Activated CD8-positive, alpha-beta T cell treated with anti-CD3 and anti-CD28 coated beads for 36 hours (primary cell): ENCODE measurements at regions of chr12 and their contacts with region 1.

Region 1: DNA sequence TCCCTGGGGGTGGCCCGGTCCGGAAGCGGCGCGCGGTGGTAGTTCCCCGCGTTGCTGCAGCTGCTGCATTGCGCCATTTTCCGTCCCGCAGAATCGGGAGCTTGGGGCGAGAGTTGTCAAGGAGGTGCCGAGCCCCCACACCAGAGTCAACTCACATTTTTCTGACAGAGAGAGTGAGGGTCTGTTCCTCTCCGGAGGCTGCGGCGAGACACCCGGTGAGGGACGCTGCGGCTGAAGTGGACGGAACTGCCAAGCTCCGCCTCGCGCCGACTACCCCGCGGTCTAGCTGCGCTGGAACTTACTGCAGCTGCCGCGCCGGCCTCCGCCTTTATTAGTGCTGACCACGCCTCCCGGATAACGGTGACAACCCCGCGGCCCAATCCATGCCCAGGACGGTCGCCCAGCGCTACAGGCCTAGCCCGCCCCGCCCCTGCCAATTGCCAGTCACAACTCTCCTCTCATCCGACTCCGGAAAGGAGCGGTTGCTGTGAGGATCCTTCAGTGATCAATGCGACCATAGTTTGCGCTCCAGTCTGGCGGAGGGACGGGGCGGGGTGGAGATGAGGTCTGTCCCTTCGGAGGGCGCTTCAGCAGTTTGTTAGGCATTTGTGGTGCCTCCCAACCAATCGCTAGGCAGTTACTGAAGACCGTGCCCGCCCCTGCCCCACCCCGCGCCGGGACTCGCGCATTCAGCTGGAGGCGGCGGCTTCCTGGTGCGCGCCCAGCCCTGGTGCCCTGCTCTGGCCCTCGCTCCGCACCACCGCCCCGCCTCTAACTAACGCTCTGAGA is at the start of gene VAMP1:
- DNase-seq: peak; percentile 99
- ATAC-seq: peak; percentile 90
- H3K4me3 Mint-ChIP-seq: peak within 1 kb of the TSS; percentile 89
- H3K27ac Mint-ChIP-seq: peak within 1 kb of the TSS; percentile 88
- H3K4me1 Mint-ChIP-seq: peaks cover 44% of the 10 kb centered on the region
- H3K27me3 Mint-ChIP-seq: no peaks in the 10 kb centered on the region
- CTCF ChIP-seq: no peak
- total RNA-seq, gene VAMP1: 50.0 to 51.2 TPM

Region 2: GRCh38 chr12:6124411-6125309 is 345.9 kb before region 1 on chr12 and contains the start of gene VWF:
- CTCF ChIA-PET with region 1: no interaction called
- POLR2A ChIA-PET with region 1: no interaction called
- intact Hi-C with region 1: no loop called
- DNase-seq: no peak
- ATAC-seq: no peak
- H3K4me3 Mint-ChIP-seq: no peak within 1 kb of the TSS
- H3K27ac Mint-ChIP-seq: no peak within 1 kb of the TSS
- H3K4me1 Mint-ChIP-seq: no peaks in the 10 kb centered on the region
- H3K27me3 Mint-ChIP-seq: no peaks in the 10 kb centered on the region
- CTCF ChIP-seq: no peak
- total RNA-seq, gene VWF: 0.11 to 0.13 TPM

Region 3: GRCh38 chr12:6323340-6323994 is 147.1 kb before region 1 on chr12:
- CTCF ChIA-PET with region 1: interaction called, 13 read pairs
- POLR2A ChIA-PET with region 1: interaction called, 8 read pairs
- intact Hi-C with region 1: no loop called
- DNase-seq: peak; percentile 55
- ATAC-seq: peak; percentile 75
- H3K4me3 Mint-ChIP-seq: peak overlapping the region; percentile 51
- H3K27ac Mint-ChIP-seq: peak overlapping the region; percentile 89
- H3K4me1 Mint-ChIP-seq: peaks cover 49% of the 10 kb centered on the region
- H3K27me3 Mint-ChIP-seq: no peaks in the 10 kb centered on the region
- CTCF ChIP-seq: peak; percentile 86

Region 4: DNA sequence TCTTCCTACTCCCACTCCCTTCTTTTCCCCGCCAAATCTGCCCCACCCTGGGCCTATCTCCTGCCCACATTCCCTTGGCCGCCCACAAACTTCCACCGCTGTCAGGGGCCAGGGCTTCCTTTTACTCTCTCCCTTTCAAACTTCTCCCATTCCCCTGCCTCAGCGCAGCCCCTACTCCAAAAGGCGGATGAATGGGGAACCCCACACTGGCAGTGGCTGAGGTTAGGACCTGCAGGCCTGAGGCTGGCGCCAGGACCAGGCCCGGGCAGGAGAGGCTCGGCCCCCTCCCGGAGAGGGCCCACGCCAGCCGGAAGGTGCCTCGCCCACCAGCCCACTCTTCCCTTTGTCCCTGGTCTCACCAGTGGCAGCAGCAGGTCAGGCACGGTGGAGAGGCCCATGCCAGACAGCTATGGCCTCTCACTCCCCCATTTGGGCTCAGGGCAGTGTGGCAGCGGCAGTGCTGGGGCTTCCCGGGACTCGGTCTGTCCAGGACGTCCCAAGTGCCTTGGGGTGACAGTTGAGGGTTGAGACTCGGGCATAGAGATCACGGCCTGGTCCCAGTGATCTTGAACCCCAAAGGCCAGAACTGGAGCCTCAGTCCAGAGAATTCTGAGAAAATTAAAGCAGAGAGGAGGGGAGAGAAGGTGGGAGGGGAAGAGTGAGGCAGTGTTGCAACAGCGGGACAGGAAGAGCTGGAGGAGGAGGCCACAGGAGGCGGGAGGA is 129.0 kb before region 1 on chr12 and contains the start of gene TNFRSF1A:
- CTCF ChIA-PET with region 1: interaction called, 31 read pairs
- POLR2A ChIA-PET with region 1: interaction called, 10 read pairs
- intact Hi-C with region 1: loop called (anchors 10 kb)
- DNase-seq: peak; percentile 62
- ATAC-seq: peak; percentile 27
- H3K4me3 Mint-ChIP-seq: no peak within 1 kb of the TSS
- H3K27ac Mint-ChIP-seq: no peak within 1 kb of the TSS
- H3K4me1 Mint-ChIP-seq: peaks cover 40% of the 10 kb centered on the region
- H3K27me3 Mint-ChIP-seq: no peaks in the 10 kb centered on the region
- CTCF ChIP-seq: no peak
- total RNA-seq, gene TNFRSF1A: 40.6 TPM

Region 5: DNA sequence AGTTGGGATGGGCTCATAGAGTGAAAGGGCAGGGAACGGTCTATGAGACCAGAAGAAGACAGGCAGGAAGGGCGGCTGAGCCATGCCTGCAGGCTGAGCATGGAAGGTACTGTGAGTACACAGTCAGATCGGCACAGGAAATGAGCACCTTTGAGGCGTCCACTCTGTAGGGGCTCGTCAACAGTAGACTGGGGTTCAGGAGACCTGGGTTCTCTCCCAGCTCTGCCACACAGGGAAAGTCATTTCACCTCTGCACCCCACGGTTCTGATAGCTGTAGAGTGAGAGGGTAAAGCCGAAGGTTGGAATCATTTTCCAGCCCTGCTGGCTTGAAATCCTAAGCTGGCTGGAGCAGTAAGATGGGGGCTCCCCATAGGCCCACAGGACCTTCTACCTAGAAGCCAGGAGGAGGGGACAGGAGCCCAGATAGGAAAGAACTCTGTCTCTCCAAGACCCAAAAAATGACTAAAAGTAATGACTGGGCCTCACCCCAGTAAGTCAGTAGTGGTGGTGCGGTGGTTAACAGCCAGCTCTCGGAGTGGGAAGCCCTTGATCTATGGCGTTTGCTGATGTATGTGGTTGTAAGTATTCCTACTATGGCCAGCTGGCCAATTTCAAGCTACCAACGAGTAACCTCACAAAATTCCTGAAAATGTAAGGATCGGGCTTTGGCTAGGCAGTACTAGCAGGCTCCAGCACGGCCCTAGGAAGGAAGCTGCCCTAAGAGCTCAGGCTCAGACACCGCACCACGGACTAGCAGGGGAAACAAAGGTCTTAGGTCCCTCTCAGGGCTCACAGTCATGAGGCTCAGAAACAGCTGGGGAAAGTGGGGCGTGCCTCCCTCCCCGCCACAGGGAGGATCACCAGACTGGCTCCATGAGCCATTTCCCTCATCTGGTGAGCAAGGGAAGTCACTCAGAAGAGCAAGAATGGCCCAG is 36.1 kb before region 1 on chr12:
- CTCF ChIA-PET with region 1: interaction called, 145 read pairs
- POLR2A ChIA-PET with region 1: interaction called, 14 read pairs
- intact Hi-C with region 1: no loop called
- DNase-seq: peak; percentile 72
- ATAC-seq: peak; percentile 84
- H3K4me3 Mint-ChIP-seq: peak overlapping the region; percentile 63
- H3K27ac Mint-ChIP-seq: peak overlapping the region; percentile 90
- H3K4me1 Mint-ChIP-seq: peaks cover 71% of the 10 kb centered on the region
- H3K27me3 Mint-ChIP-seq: no peaks in the 10 kb centered on the region
- CTCF ChIP-seq: no peak

Region 6: GRCh38 chr12:6451348-6452244 is 19.0 kb before region 1 on chr12 and contains the start of gene TAPBPL:
- CTCF ChIA-PET with region 1: interaction called, 81 read pairs
- POLR2A ChIA-PET with region 1: interaction called, 110 read pairs
- intact Hi-C with region 1: no loop called
- DNase-seq: peak; percentile 94
- ATAC-seq: peak; percentile 77
- H3K4me3 Mint-ChIP-seq: peak within 1 kb of the TSS; percentile 97
- H3K27ac Mint-ChIP-seq: peak within 1 kb of the TSS; percentile 99
- H3K4me1 Mint-ChIP-seq: peaks cover 53% of the 10 kb centered on the region
- H3K27me3 Mint-ChIP-seq: no peaks in the 10 kb centered on the region
- CTCF ChIP-seq: no peak
- total RNA-seq, gene TAPBPL: 23.3 to 28.0 TPM

Region 7: DNA sequence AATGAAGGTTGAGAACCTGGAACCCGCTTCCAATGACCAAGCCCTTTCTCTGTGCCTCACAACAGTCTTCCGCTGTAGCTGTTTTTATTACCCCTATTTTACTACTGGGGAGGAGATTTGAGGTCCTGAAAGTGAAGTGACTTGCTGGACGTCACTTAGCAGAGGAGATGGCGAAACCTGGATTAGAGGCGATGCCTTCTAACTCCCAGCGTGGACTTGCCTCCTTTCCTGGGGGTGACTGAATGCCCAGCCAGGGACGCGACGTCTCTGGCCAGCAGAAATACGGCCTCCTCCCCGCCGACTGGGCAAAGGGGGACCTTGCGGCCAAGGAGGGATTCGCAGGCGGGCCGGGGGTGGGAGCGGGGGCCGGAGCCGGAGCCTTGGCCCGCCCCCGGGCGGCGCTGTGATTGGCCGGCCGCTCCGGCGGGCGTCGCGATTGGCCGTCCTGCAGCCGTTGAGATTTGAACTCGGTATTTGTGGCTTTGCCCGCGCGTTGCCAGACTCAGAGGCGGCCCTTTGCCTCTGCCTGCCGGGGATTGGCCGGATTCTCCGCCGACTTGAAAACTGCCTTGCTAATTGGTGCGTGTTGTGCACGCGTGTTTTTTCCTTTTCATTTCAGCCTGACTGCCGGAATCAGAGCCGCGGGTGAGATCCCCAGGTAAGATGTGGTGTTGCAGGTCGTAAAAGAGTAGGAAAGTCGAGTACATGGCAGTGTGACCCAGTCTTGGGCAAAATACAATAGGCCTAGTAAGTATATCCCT is 23.1 kb after region 1 on chr12 and contains the start of gene NCAPD2:
- CTCF ChIA-PET with region 1: interaction called, 10 read pairs
- POLR2A ChIA-PET with region 1: interaction called, 22 read pairs
- intact Hi-C with region 1: no loop called
- DNase-seq: peak; percentile 98
- ATAC-seq: peak; percentile 88
- H3K4me3 Mint-ChIP-seq: peak within 1 kb of the TSS; percentile 99
- H3K27ac Mint-ChIP-seq: peak within 1 kb of the TSS; percentile 99
- H3K4me1 Mint-ChIP-seq: peaks cover 31% of the 10 kb centered on the region
- H3K27me3 Mint-ChIP-seq: no peaks in the 10 kb centered on the region
- CTCF ChIP-seq: no peak
- total RNA-seq, gene NCAPD2: 195 to 196 TPM

Region 8: DNA sequence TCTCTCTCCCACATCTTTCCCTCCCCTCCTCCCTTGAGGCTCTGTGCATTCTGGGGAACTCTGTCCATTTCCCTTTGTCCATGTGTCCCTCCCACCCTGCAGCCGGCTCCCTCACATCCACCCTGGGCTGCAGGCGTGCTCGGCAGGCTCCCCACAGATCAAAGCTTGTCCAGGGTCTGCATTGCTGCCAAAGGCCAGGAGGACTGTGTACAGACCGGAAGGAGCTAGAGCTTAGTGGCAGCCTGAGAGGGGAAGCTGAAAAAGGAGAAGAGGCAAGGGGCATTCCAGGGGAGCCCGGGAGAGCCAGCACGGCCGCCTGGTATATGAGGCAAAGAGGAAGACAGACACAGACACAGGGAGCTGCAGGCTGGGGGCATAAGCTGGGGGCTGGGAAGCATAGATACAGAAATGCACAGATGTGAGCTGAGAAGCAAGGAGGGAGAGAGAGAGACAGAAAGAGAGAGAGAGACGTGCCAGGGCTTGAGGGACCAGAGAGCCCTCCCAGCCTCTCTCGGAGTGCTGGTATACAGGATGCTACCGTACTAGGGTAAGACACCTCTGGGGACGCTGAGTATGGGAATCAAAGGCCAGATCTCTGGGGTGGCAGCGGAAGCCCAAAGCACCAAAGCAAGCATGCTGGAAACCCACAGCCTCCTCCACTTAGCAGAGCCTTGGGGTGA is 322.1 kb after region 1 on chr12:
- CTCF ChIA-PET with region 1: no interaction called
- POLR2A ChIA-PET with region 1: no interaction called
- intact Hi-C with region 1: no loop called
- DNase-seq: peak; percentile 62
- ATAC-seq: peak; percentile 81
- H3K4me3 Mint-ChIP-seq: peak overlapping the region; percentile 33
- H3K27ac Mint-ChIP-seq: peak overlapping the region; percentile 14
- H3K4me1 Mint-ChIP-seq: peaks cover 49% of the 10 kb centered on the region
- H3K27me3 Mint-ChIP-seq: peaks cover 14% of the 10 kb centered on the region
- CTCF ChIP-seq: no peak